Motor neuron (in vitro differentiated cells): ENCODE measurements at regions of chr11 and their contacts with region 1.

Region 1: GRCh38 chr11:9137293-9138132 is 46.1 kb upstream of the SCUBE2 start:
- ATAC-seq: peak; percentile 93 to 99 (median 97)
- H3K4me3 ChIP-seq: no peak overlapping the region
- H3K27ac ChIP-seq: no peak overlapping the region
- H3K4me1 ChIP-seq: no peaks in the 10 kb centered on the region

Region 2: GRCh38 chr11:9015677-9016076 is 121.8 kb before region 1 on chr11:
- in situ Hi-C with region 1: loop called in 2 of 9 experiments (anchors 25 kb)
- ATAC-seq: peak; percentile 67 to 98 (median 87)
- H3K4me3 ChIP-seq: no peak overlapping the region
- H3K27ac ChIP-seq: no peak overlapping the region
- H3K4me1 ChIP-seq: no peaks in the 10 kb centered on the region

Region 3: GRCh38 chr11:9347100-9347499 is 209.6 kb after region 1 on chr11:
- in situ Hi-C with region 1: no loop called
- ATAC-seq: no peak
- H3K4me3 ChIP-seq: no peak overlapping the region
- H3K27ac ChIP-seq: no peak overlapping the region
- H3K4me1 ChIP-seq: peaks cover 0 to 3% of the 10 kb centered on the region in 2 donors